ENCODE measurements at regions of chr17 and their contacts with region 1.

Region 1: DNA sequence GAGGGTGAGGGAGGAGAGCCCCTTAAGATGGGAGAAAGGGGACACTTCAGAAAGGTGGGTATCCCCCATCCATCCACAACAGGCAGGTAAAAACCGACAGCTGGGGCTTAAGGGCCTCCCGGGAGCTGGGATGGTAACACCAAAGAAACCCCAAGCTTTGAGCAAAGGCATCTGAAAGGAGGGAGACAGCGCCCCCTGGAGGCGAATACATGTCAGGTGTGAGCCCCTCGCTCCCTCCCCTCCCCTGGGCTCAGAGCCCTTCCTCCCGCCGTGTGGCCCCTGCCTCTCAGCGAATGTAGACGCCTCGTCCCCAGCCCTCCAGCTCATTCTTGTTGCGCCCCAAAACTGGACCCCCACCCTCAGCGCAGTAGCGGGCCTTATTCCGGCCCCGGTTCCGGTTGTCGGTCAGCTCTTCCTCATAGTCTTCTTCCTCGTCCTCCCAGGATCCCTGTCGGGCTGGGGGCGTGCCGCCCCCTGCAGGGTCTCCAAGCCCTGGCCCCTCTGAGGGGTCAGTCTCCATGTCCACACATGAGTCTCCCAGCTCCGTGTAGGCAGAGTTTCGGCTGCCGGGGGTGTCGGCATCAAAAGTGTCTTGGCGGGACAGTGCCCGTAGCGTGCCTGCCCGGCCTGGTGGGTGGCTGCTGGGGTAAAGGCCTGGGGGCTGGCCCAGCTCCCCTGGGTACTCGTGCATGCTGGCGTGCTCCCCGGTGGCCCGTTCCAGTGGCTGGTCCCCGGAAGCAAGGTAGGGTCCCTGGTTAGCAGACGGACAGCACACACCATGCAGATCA is 9.1 kb upstream of the ARL5C start:
- DNase-seq: peak; percentile 79

Region 2: DNA sequence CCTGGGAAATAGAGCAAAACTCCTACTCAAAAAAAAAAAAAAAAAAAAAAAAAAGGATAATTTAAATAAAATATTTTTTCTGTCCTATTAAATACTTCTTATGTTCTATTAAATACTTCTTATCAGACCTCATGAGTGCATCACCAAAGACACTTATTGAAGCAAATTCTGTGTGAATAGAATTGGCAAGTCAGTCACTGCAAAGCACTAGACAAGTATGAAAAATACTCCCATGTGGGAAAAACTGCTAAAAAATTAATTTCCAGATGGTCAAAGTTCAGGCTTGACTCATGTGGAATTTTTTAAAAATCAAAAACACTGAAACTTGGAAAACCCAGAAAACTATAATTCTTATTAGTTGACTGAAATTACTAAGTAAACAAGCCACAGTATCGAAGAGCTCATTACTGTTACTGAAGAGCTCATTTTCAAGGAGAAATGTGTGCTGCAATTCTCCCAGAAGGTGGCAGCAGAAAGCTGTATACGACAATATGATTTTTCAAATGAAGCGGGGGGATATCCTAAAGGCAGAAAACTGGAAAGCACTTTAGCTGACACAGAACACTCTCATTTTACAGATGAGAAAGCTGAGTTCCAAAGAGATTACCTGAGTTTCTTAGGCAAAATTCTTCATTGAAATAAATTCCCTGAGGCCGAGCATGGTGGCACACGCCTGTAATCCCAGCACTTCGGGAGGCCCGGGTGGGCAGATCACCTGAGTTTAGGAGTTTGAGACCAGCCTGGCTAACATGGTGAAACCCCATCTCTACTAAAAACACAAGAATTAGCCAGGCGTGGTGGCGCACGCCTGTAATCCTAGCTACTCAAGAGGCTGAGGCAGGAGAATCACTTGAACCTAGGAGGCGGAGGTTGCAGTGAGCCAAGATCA is 192.0 kb before region 1 on chr17:
- CTCF ChIA-PET with region 1: interaction called, 18 read pairs
- POLR2A ChIA-PET with region 1: no interaction called
- DNase-seq: peak; percentile 44

Region 3: GRCh38 chr17:39164675-39165143 is 10.4 kb before region 1 on chr17:
- CTCF ChIA-PET with region 1: interaction called, 57 read pairs
- POLR2A ChIA-PET with region 1: interaction called, 10 read pairs
- DNase-seq: peak; percentile 80

Region 4: DNA sequence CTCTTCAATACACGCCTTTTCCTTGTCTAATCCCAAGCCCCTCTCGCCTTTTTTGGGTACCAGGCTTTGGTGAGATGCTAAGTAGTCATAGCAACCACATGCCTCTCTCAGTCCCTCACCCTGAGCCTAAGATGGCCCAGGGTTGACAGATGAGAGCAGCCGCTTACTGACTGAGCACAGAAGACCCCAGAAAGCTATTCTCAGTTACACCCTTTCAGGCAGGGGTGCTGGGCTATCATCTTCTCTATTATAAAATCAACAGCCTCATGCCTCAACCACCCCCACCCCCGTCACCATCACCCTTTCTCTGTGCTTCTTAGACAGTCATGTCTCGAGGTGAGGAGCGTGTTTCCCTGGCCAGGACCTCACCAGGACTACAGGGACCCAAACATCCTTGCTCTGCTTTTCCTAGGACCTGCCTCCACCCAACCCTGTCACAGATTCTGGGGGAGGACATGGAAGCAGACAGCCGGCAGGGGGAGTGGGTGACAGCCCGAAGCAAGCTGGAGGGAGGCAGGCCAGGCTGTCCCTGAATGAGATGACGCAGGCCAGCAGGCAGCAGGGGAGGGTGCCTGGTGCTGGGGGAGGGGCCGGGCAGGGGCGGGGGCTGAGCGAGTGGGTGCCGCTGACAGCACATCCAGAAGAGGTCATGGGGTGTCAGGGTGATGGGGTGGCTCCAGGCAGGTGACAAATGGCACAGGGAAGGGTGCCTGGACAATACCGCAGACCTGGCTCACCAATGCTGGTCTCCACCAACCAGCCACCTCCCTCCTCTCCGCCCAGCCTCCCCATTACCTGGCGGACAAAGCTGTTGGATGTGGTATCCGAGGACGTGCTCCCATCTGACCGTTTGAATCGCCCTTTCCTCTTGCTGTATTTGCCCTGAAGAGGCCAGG is 19.2 kb after region 1 on chr17:
- CTCF ChIA-PET with region 1: interaction called, 13 read pairs
- POLR2A ChIA-PET with region 1: interaction called, 16 read pairs
- DNase-seq: peak; percentile 67

Region 5: DNA sequence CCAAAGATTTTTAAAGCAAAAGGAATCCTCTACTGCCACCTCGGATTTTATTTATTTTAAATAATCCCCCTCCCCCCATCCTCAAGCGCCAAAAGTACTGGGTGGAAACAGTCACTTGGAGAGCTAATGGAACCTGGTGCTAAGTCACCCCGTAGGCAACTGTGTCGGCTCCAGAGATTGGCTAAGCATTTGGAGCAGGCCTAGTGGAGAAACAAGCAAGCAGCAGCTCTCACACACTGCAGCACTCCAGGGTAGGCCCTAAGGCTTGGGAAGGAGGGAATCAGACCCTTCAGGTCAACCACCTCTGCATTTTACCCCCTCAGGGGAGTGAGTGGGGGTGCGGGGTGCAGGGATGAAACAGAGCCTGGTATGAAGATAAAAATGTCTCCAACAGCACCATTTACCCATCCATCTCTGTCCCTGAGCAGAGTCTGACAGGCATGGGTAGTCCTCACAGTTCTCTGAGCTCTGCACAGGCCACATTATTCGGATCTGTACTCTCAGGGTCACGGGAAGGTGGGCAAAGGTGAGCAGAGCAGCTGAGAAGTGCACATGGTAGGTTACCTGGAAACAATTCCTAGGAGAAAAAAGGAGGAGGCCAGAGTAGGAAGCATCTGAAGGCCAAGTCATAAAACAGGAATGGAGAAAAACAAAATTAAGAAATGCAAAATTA is 77.8 kb after region 1 on chr17:
- CTCF ChIA-PET with region 1: no interaction called
- POLR2A ChIA-PET with region 1: no interaction called
- DNase-seq: peak; percentile 41

Region 6: GRCh38 chr17:39579318-39580081 is 404.4 kb after region 1 on chr17:
- CTCF ChIA-PET with region 1: no interaction called
- POLR2A ChIA-PET with region 1: no interaction called
- DNase-seq: no peak

Measured in HEK293T (cell line).